ENCODE measurements at regions of chr3 and their contacts with region 1.

Region 1: DNA sequence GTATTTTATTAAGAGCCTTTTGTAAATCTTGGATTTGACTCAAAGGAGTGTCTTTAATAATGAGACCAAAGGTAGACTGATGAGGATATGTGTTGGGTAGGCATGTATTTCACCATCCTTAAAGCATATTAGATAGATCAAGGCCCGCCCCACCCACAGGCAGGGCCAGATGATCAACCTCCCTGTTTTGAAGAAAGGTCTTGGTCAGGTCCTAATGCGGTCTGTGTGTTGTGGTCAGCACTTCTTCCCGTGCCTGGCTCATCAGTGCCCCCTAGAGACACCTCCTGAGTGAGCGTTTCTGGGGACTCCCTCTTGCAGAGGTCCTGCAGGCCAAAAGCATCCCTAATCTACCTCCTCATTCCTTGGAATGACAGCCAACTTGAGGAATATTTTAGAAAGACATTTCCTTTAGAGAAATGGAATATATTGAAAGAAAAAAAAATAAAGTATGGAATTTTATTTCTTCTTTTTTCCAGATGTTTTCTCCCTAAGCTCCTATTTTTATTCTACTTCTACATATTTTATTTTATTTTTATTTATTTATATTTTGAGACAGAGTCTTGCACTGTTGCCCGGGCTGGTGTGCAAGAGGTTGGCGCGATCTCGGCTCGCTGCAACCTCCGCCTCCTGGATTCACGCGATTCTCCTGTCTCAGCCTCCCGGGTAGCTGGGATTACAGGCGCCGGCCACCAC is 6.0 kb downstream of the TM4SF4 start:
- DNase-seq: no peak
- H3K4me3 ChIP-seq: no peak overlapping the region
- H3K27me3 ChIP-seq: no peaks in the 10 kb centered on the region
- CTCF ChIP-seq: peak; percentile 92

Region 2: GRCh38 chr3:149352556-149352955 is 127.9 kb before region 1 on chr3:
- CTCF ChIA-PET with region 1: interaction called, 69 read pairs
- POLR2A ChIA-PET with region 1: no interaction called
- DNase-seq: no peak
- H3K4me3 ChIP-seq: no peak overlapping the region
- H3K27me3 ChIP-seq: no peaks in the 10 kb centered on the region
- CTCF ChIP-seq: peak; percentile 82

Region 3: DNA sequence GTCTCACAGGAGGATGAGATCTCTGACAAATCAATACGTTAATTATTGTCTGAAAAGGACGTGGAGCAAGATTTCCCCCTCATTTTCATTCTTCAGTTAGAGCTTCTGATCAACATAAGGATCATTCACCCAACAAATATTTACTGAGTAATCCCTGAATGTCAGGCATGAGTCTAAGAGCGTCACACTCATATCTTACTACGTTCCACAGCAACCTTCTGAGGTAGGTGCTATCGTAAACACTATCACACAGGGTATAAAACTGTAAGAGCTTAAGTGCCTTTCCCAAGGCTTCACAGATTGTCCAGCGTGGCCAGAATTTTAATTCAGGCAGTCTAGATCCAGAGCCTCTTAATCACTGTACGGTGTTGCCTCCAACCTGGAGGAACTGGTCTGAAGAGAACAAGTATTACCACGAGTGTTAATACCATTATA is 92.5 kb before region 1 on chr3:
- CTCF ChIA-PET with region 1: interaction called, 14 read pairs
- POLR2A ChIA-PET with region 1: no interaction called
- DNase-seq: peak; percentile 87
- H3K4me3 ChIP-seq: no peak overlapping the region
- H3K27me3 ChIP-seq: no peaks in the 10 kb centered on the region
- CTCF ChIP-seq: no peak

Region 4: DNA sequence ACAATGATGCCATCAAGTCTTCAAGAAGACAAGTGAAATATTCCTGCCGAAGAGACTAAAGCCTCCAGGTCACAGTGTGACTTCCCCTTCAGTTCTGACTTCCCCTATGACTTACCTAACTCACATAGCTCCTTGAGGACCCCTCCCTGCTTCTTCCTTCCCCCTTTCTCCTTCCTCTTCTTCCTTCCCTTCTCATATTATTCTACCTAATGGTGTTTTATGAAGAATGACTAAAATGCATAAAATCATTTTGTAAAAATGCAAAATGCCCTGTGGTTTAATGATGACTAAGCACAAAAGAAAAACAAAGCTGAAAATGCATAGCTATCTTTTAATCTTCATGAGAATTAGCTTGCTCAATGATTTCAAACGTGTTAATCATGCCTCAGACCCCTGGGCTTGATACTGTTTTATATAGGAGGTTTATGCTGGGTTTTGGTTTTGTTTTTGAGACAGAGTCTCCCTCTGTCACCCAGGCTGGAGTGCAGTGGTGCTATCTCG is 32.1 kb before region 1 on chr3:
- CTCF ChIA-PET with region 1: interaction called, 11 read pairs
- POLR2A ChIA-PET with region 1: no interaction called
- DNase-seq: peak; percentile 46
- H3K4me3 ChIP-seq: no peak overlapping the region
- H3K27me3 ChIP-seq: no peaks in the 10 kb centered on the region
- CTCF ChIP-seq: no peak

Measured in BJ (cell line).